HCT116 (cell line): ENCODE measurements at regions of chr2 and their contacts with region 1.

Region 1: DNA sequence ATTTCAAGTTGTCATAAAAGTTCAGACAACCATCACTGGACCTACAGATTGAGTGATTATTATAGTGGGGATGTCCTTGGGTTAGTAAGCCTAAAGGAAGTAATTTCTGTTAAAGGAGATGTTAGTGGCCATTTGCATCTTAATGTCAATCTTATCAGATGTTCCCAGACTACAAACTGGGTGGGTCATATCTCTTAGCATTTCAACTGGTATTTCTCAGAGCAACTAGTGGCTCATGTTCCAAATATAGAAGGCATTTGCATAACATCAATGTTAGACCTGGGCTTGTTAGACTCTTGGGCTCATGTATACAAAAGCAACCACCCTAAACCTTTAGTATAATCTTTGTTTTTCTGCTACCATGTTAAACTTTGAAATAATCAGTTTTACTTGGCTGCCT is 17.9 kb downstream of the PLEKHA3 start:
- DNase-seq: no peak
- ATAC-seq: no peak
- H3K4me3 ChIP-seq: no peak overlapping the region
- H3K27ac ChIP-seq: no peak overlapping the region
- H3K4me1 ChIP-seq: no peaks in the 10 kb centered on the region
- H3K27me3 ChIP-seq: no peaks in the 10 kb centered on the region
- CTCF ChIP-seq: no peak
- POLR2A ChIP-seq: no peak
- RAD21 ChIP-seq: no peak

Region 2: DNA sequence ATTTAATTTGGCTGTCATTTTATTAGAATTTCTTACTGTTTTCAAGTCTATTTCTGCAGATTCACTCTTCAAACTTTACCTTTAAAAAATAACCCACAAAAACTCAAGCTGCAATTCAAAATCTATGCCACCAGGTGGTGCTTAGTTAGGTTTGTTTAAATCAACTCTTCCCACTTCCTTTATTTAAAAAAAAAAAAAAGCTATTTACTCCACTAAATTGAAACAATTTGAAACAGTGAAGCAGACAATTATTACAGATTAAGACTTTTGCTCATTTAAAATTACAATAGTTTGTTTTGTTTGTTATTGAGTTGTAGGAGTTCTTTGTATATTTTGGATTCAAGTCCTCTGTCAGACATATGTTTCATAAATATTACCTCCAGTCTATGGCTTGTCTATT is 725.6 kb before region 1 on chr2:
- CTCF ChIA-PET with region 1: no interaction called
- POLR2A ChIA-PET with region 1: no interaction called
- RAD21 ChIA-PET with region 1: no interaction called
- intact Hi-C with region 1: no loop called
- DNase-seq: peak; percentile 39
- ATAC-seq: no peak
- H3K4me3 ChIP-seq: no peak overlapping the region
- H3K27ac ChIP-seq: no peak overlapping the region
- H3K4me1 ChIP-seq: peaks cover 0 to 5% of the 10 kb centered on the region in 2 experiments; a peak in 2 of 4 replicates
- H3K27me3 ChIP-seq: no peaks in the 10 kb centered on the region
- CTCF ChIP-seq: peak; percentile 33 to 65 (median 50); a peak in 5 of 6 replicates
- POLR2A ChIP-seq: no peak
- RAD21 ChIP-seq: peak; percentile 40; the same call in 1 of the 2 replicates

Region 3: DNA sequence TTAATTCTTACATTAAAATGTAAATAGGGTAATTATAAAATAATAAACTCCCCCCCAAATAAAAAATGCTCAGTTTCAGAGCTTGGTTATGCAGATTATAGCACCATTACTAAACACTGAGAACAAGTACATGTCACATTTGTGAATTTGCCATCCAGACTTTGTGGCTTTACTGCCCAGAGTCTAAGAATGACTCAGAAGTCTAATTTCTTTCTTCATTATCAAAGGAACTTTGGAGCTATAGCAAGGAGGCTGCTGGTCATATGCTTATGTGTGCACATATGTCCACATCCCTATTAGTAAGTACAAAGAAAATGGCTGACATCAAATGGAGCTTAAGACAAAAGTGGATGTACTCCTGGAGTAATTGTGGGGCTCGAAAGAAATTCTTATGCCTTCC is 1015.0 kb after region 1 on chr2:
- CTCF ChIA-PET with region 1: no interaction called
- POLR2A ChIA-PET with region 1: no interaction called
- RAD21 ChIA-PET with region 1: no interaction called
- intact Hi-C with region 1: loop called (anchors 10 kb)
- DNase-seq: no peak
- ATAC-seq: no peak
- H3K4me3 ChIP-seq: no peak overlapping the region
- H3K27ac ChIP-seq: no peak overlapping the region
- H3K4me1 ChIP-seq: no peaks in the 10 kb centered on the region
- H3K27me3 ChIP-seq: no peaks in the 10 kb centered on the region
- CTCF ChIP-seq: no peak
- POLR2A ChIP-seq: no peak
- RAD21 ChIP-seq: no peak